Ovary (tissue), 10 donors: ENCODE measurements at regions of chr10 and their contacts with region 1.

Region 1: GRCh38 chr10:90075995-90076394 is 374.6 kb downstream of the KIF20B start:
- DNase-seq: no peak
- H3K4me3 ChIP-seq: no peak overlapping the region
- H3K27ac ChIP-seq: no peak overlapping the region
- H3K4me1 ChIP-seq: no peaks in the 10 kb centered on the region
- H3K27me3 ChIP-seq: no peaks in the 10 kb centered on the region
- CTCF ChIP-seq: no peak
- EP300 ChIP-seq: no peak
- POLR2A ChIP-seq: no peak

Region 2: GRCh38 chr10:89981891-89982290 is 94.1 kb before region 1 on chr10:
- intact Hi-C with region 1: no loop called
- DNase-seq: no peak
- H3K4me3 ChIP-seq: no peak overlapping the region
- H3K27ac ChIP-seq: no peak overlapping the region
- H3K4me1 ChIP-seq: no peaks in the 10 kb centered on the region
- H3K27me3 ChIP-seq: no peaks in the 10 kb centered on the region
- CTCF ChIP-seq: no peak
- EP300 ChIP-seq: no peak
- POLR2A ChIP-seq: no peak

Region 3: GRCh38 chr10:90288391-90288933 is 212.5 kb after region 1 on chr10:
- intact Hi-C with region 1: no loop called
- DNase-seq: no peak
- H3K4me3 ChIP-seq: no peak overlapping the region
- H3K27ac ChIP-seq: no peak overlapping the region
- H3K4me1 ChIP-seq: no peaks in the 10 kb centered on the region
- H3K27me3 ChIP-seq: peaks cover 2% of the 10 kb centered on the region
- CTCF ChIP-seq: no peak
- EP300 ChIP-seq: no peak
- POLR2A ChIP-seq: no peak

Region 4: DNA sequence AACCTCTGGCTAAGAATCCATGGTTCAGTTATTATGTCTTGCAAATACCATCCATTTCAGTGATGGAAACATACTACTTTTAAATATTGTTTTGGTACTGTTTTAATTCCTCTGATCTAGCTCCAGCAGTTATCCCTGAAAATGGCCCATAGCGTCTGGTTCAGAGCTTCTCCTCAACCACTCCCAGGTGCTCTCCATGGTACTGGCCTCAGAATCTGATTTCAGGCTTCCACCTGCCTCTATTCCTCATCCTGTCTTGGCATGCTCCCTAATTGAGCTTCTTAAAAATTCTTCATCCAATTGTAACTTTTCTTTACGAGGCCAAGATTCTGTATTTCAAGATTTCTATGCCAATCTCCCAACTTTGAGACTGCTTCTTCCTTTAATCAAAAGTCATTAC is 545.6 kb after region 1 on chr10:
- intact Hi-C with region 1: loop called in 1 of 4 experiments (anchors 5 kb)
- DNase-seq: no peak
- H3K4me3 ChIP-seq: no peak overlapping the region
- H3K27ac ChIP-seq: no peak overlapping the region
- H3K4me1 ChIP-seq: no peaks in the 10 kb centered on the region
- H3K27me3 ChIP-seq: no peaks in the 10 kb centered on the region
- CTCF ChIP-seq: no peak
- EP300 ChIP-seq: no peak
- POLR2A ChIP-seq: no peak